Endothelial cell of umbilical vein (primary cell): ENCODE measurements at regions of chr2 and their contacts with region 1.

Region 1: GRCh38 chr2:67476809-67477790 is 80.0 kb downstream of the ETAA1 start:
- DNase-seq: peak; percentile 68
- H3K4me3 ChIP-seq: no peak overlapping the region
- H3K27ac ChIP-seq: no peak overlapping the region
- H3K4me1 ChIP-seq: no peaks in the 10 kb centered on the region
- H3K27me3 ChIP-seq: no peaks in the 10 kb centered on the region
- CTCF ChIP-seq: peak; percentile 39 to 40
- POLR2A ChIP-seq: no peak

Region 2: DNA sequence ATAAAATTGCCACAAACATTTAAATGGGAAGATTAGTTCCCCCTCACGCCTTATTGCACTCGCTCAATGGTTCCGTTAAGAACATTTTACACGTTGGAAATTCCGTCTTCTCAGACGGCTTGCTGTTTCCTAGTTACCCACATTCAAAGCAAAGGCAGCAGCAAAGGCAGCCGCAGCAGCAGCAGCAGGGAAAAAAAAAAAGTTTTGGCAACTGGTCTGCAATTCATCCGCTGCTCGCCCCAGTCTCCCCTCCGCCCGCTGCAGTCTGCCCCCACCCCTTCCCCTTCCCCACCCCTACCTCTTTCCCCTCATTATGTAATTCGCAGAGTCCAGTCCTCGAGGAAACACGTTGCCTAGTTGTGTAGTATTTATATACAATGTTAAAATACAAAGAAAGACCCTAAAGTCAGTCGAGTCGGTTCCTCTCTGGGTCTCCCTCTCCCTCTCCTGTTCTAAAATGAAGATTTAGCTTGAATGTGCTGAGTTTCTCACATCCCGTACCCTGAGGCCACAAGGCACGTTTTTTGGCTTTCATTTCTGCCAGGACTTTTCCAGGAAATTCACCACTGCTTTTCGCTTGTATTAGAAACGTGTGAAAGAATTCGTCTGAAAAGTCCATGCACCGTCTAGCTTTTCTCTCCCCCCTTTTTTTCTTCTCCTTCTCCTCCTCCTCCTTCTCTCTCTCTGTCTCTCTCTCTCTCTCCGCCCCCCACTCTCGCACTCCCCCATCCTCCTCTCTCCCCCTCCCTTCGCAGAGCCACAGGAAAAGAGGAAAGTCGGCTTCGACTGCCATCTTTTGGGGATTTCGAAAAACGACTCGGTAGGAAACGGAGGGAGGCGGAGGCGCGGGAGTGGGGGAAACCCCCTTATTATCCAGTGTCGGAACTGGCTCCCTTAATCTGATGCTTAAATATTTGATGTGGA is 902.1 kb before region 1 on chr2:
- CTCF ChIA-PET with region 1: no interaction called
- POLR2A ChIA-PET with region 1: no interaction called
- dilution Hi-C with region 1: no loop called
- intact Hi-C with region 1: loop called (anchors 1 kb)
- DNase-seq: peak; percentile 81
- H3K4me3 ChIP-seq: peak overlapping the region; percentile 56 to 92 (median 85)
- H3K27ac ChIP-seq: peak overlapping the region; percentile 74
- H3K4me1 ChIP-seq: peaks cover 18% of the 10 kb centered on the region
- H3K27me3 ChIP-seq: peaks cover 32 to 38% of the 10 kb centered on the region in 2 experiments
- CTCF ChIP-seq: peak; percentile 45 to 60
- POLR2A ChIP-seq: no peak

Region 3: GRCh38 chr2:66753660-66754059 is 723.4 kb before region 1 on chr2:
- CTCF ChIA-PET with region 1: no interaction called
- POLR2A ChIA-PET with region 1: no interaction called
- dilution Hi-C with region 1: no loop called
- intact Hi-C with region 1: loop called (anchors 10 kb)
- DNase-seq: no peak
- H3K4me3 ChIP-seq: no peak overlapping the region
- H3K27ac ChIP-seq: no peak overlapping the region
- H3K4me1 ChIP-seq: no peaks in the 10 kb centered on the region
- H3K27me3 ChIP-seq: no peaks in the 10 kb centered on the region
- CTCF ChIP-seq: no peak
- POLR2A ChIP-seq: no peak

Region 4: DNA sequence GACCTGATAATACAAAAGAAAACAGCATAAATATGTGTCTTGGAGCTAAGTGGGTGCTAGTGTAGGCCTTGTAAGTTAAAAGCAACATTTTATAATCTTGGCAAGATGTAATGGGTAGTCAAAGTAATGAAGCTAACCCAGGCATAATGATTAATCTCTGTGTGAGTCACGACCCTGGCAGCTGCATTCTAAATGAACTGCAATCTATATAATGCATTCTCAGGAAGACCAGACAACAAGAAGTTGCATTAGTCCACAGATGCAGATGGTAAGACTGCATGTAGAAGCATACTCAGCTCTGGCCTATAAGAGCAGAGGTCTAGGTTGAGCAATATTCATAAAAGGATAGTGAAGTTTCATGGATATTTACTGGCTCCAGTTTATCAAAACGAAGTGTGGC is 165.6 kb before region 1 on chr2:
- CTCF ChIA-PET with region 1: no interaction called
- POLR2A ChIA-PET with region 1: no interaction called
- dilution Hi-C with region 1: no loop called
- intact Hi-C with region 1: no loop called
- DNase-seq: peak; percentile 56
- H3K4me3 ChIP-seq: no peak overlapping the region
- H3K27ac ChIP-seq: no peak overlapping the region
- H3K4me1 ChIP-seq: no peaks in the 10 kb centered on the region
- H3K27me3 ChIP-seq: no peaks in the 10 kb centered on the region
- CTCF ChIP-seq: no peak
- POLR2A ChIP-seq: no peak

Region 5: DNA sequence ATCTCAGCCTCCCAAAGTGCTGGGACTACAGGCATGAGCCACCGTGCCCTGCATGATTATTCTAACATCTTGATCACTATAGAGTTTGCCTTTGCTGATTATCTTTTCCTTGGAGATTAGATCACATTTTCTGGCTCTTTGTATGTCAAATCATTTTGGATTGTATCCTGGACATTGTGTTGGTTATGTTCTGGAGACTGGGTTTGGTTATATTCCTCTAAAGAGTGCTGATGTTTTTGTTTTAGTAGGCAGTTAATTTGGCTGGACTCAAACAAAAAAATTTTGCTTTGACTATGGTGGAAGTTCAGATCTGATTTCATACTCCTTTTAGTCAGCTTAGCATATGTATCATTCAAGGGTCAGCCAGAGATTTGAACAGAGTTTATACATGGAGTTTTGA is 53.6 kb before region 1 on chr2:
- CTCF ChIA-PET with region 1: no interaction called
- POLR2A ChIA-PET with region 1: no interaction called
- dilution Hi-C with region 1: no loop called
- intact Hi-C with region 1: no loop called
- DNase-seq: no peak
- H3K4me3 ChIP-seq: no peak overlapping the region
- H3K27ac ChIP-seq: no peak overlapping the region
- H3K4me1 ChIP-seq: no peaks in the 10 kb centered on the region
- H3K27me3 ChIP-seq: no peaks in the 10 kb centered on the region
- CTCF ChIP-seq: no peak
- POLR2A ChIP-seq: no peak

Region 6: GRCh38 chr2:67503066-67503795 is 26.1 kb after region 1 on chr2:
- CTCF ChIA-PET with region 1: interaction called, 10 read pairs
- POLR2A ChIA-PET with region 1: no interaction called
- dilution Hi-C with region 1: no loop called
- intact Hi-C with region 1: no loop called
- DNase-seq: peak; percentile 90
- H3K4me3 ChIP-seq: no peak overlapping the region
- H3K27ac ChIP-seq: peak overlapping the region; percentile 95
- H3K4me1 ChIP-seq: peaks cover 18% of the 10 kb centered on the region
- H3K27me3 ChIP-seq: no peaks in the 10 kb centered on the region
- CTCF ChIP-seq: no peak
- POLR2A ChIP-seq: no peak